Transverse colon (tissue), 4 donors: ENCODE measurements at regions of chr6 and their contacts with region 1.

Region 1: DNA sequence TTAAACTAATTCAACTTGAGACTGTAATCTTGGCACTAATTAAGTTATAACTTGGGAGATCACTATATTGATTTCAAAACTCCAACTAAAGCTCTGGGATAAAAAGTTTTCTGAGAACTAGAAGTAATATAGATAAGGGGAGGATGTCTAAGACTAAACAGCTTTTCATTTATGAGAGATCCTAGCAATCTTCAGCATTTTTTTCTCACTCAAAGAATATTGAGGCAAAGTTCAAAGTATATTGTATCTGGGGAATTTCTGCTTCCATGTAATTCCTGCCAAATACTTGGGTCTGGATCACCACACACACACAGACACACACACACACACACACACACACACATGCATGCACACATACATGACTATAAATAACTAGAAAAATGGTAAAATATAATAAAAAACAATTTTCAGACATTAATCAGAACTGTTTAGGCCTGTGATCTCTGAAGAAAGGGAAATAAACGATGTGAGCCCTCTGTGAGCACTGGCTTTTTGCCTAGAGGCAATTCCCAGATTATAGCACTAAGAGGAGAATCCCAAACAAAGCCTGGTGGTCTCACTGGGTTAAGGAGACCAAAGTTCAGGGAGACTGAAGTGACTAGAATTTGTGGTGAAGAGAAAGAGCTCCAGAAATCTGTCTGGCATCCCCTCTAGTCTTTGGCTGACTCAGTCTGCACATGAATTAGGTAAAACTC is 92.8 kb downstream of the ADAT2 start:
- DNase-seq: no peak
- H3K4me3 ChIP-seq: no peak overlapping the region
- H3K27ac ChIP-seq: no peak overlapping the region
- H3K4me1 ChIP-seq: peaks cover 0 to 5% (median 0%) of the 10 kb centered on the region in 4 donors
- H3K27me3 ChIP-seq: no peaks in the 10 kb centered on the region
- CTCF ChIP-seq: no peak
- EP300 ChIP-seq: no peak
- POLR2A ChIP-seq: no peak

Region 2: DNA sequence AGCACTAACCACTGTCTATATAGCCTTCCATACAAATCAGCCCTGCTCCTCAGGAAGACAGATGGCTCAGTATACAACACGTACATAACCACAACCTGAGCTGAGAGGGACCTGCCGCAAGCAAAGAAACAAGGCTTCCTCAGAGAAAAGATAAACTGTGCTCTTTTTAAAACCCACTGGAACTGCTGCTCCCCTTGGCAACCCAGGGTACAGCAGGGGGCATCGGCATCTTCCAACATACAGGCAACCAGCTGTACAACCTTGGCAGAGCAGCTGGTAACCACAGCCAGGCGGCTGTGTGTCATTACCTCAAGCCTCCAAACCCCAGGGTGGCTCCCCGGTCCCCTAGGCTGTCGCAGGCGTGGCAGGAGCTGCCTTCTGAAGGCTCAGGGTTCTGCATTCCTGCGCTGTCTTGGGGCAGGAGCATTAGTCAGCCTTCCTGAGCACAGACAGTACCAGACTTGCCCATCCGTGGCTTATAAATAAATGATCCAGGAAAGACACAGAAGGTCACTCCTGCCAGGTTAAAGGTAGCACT is 806.4 kb before region 1 on chr6:
- in situ Hi-C with region 1: no loop called
- intact Hi-C with region 1: loop called (anchors 5 kb)
- DNase-seq: no peak
- H3K4me3 ChIP-seq: no peak overlapping the region
- H3K27ac ChIP-seq: no peak overlapping the region
- H3K4me1 ChIP-seq: no peaks in the 10 kb centered on the region
- H3K27me3 ChIP-seq: no peaks in the 10 kb centered on the region
- CTCF ChIP-seq: no peak
- EP300 ChIP-seq: no peak
- POLR2A ChIP-seq: no peak